Heart right ventricle (tissue), 16 donors: ENCODE measurements at regions of chr12 and their contacts with region 1.

Region 1: GRCh38 chr12:67211494-67211893 is 57.7 kb upstream of the CAND1 start:
- DNase-seq: no peak
- ATAC-seq: no peak
- H3K4me3 ChIP-seq: no peak overlapping the region
- H3K27ac ChIP-seq: no peak overlapping the region
- H3K4me1 ChIP-seq: no peaks in the 10 kb centered on the region
- H3K27me3 ChIP-seq: peaks cover 0 to 11% (median 0%) of the 10 kb centered on the region in 7 donors
- CTCF ChIP-seq: no peak

Region 2: DNA sequence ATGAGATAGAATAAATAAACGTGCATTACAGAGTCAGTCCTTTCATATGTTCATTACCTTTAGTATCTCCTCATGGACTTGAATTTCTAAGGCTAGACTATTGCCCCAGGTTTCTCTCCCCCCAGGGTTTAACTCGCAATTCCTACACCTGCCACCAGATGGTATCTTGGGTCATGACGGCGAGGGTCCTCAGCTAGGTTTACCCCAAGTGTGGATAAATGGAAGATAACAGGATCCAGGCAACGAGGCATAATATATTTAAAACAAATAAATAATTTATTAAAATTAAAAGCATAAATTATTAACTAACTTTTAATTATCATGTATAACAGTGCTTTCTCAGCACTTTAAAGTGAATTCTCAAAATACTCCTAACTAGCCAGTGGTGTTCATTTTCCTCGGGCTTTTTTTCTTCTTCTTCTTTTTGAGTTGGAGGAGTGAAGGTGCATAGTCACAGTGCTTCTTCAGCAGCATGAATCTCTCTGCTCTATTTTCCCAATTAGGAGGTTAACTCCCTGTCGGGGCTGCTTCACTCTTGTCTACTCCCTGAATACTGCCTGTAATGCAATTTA is 185.9 kb before region 1 on chr12:
- intact Hi-C with region 1: loop called in 2 of 10 experiments (anchors 10 kb)
- DNase-seq: peak in 1 of 2 donors; percentile 5
- ATAC-seq: no peak
- H3K4me3 ChIP-seq: no peak overlapping the region
- H3K27ac ChIP-seq: no peak overlapping the region
- H3K4me1 ChIP-seq: no peaks in the 10 kb centered on the region
- H3K27me3 ChIP-seq: peaks cover 0 to 8% (median 0%) of the 10 kb centered on the region in 7 donors
- CTCF ChIP-seq: peak; percentile 26 to 72 (median 63)

Region 3: GRCh38 chr12:67148265-67148664 is 63.2 kb before region 1 on chr12:
- intact Hi-C with region 1: loop called in 1 of 10 experiments (anchors 5 kb)
- DNase-seq: no peak
- ATAC-seq: no peak
- H3K4me3 ChIP-seq: no peak overlapping the region
- H3K27ac ChIP-seq: no peak overlapping the region
- H3K4me1 ChIP-seq: no peaks in the 10 kb centered on the region
- H3K27me3 ChIP-seq: peaks cover 0 to 5% (median 0%) of the 10 kb centered on the region in 7 donors
- CTCF ChIP-seq: no peak